Natural killer cell (primary cell): ENCODE measurements at regions of chr5 and their contacts with region 1.

Region 1: GRCh38 chr5:126777974-126778674 is 1.2 kb downstream of the LMNB1 start:
- DNase-seq: peak; percentile 79 to 96
- ATAC-seq: peak; percentile 72 to 85 (median 73)
- H3K4me3 ChIP-seq: peak overlapping the region; percentile 85
- H3K4me3 Mint-ChIP-seq: peak overlapping the region; percentile 97
- H3K27ac ChIP-seq: peak overlapping the region; percentile 86
- H3K27ac Mint-ChIP-seq: peak overlapping the region; percentile 93 to 99
- H3K4me1 ChIP-seq: peaks cover 19% of the 10 kb centered on the region
- H3K4me1 Mint-ChIP-seq: peaks cover 25 to 28% of the 10 kb centered on the region in 2 donors
- H3K27me3 ChIP-seq: no peaks in the 10 kb centered on the region
- H3K27me3 Mint-ChIP-seq: no peaks in the 10 kb centered on the region
- CTCF ChIP-seq: no peak

Region 2: GRCh38 chr5:125813221-125813974 is 964.7 kb before region 1 on chr5:
- intact Hi-C with region 1: no loop called
- DNase-seq: no peak
- ATAC-seq: no peak
- H3K4me3 ChIP-seq: no peak overlapping the region
- H3K4me3 Mint-ChIP-seq: no peak overlapping the region
- H3K27ac ChIP-seq: no peak overlapping the region
- H3K27ac Mint-ChIP-seq: no peak overlapping the region
- H3K4me1 ChIP-seq: no peaks in the 10 kb centered on the region
- H3K4me1 Mint-ChIP-seq: no peaks in the 10 kb centered on the region
- H3K27me3 ChIP-seq: no peaks in the 10 kb centered on the region
- H3K27me3 Mint-ChIP-seq: no peaks in the 10 kb centered on the region
- CTCF ChIP-seq: no peak

Region 3: GRCh38 chr5:126745259-126745992 is 32.7 kb before region 1 on chr5:
- intact Hi-C with region 1: loop called (anchors 1 kb)
- DNase-seq: no peak
- ATAC-seq: no peak
- H3K4me3 ChIP-seq: no peak overlapping the region
- H3K4me3 Mint-ChIP-seq: no peak overlapping the region
- H3K27ac ChIP-seq: no peak overlapping the region
- H3K27ac Mint-ChIP-seq: no peak overlapping the region
- H3K4me1 ChIP-seq: peaks cover 3% of the 10 kb centered on the region
- H3K4me1 Mint-ChIP-seq: peaks cover 8 to 17% of the 10 kb centered on the region in 2 donors
- H3K27me3 ChIP-seq: no peaks in the 10 kb centered on the region
- H3K27me3 Mint-ChIP-seq: no peaks in the 10 kb centered on the region
- CTCF ChIP-seq: no peak

Region 4: GRCh38 chr5:126808521-126808988 is 30.4 kb after region 1 on chr5:
- intact Hi-C with region 1: loop called (anchors 1 kb)
- DNase-seq: peak in 1 of 2 donors; percentile 53
- ATAC-seq: no peak
- H3K4me3 ChIP-seq: no peak overlapping the region
- H3K4me3 Mint-ChIP-seq: no peak overlapping the region
- H3K27ac ChIP-seq: peak overlapping the region; percentile 4
- H3K27ac Mint-ChIP-seq: peak overlapping the region; percentile 94 to 95
- H3K4me1 ChIP-seq: peaks cover 20% of the 10 kb centered on the region
- H3K4me1 Mint-ChIP-seq: peaks cover 27 to 31% of the 10 kb centered on the region in 2 donors
- H3K27me3 ChIP-seq: no peaks in the 10 kb centered on the region
- H3K27me3 Mint-ChIP-seq: no peaks in the 10 kb centered on the region
- CTCF ChIP-seq: peak; percentile 63